ENCODE measurements at regions of chr5 and their contacts with region 1.

Region 1: DNA sequence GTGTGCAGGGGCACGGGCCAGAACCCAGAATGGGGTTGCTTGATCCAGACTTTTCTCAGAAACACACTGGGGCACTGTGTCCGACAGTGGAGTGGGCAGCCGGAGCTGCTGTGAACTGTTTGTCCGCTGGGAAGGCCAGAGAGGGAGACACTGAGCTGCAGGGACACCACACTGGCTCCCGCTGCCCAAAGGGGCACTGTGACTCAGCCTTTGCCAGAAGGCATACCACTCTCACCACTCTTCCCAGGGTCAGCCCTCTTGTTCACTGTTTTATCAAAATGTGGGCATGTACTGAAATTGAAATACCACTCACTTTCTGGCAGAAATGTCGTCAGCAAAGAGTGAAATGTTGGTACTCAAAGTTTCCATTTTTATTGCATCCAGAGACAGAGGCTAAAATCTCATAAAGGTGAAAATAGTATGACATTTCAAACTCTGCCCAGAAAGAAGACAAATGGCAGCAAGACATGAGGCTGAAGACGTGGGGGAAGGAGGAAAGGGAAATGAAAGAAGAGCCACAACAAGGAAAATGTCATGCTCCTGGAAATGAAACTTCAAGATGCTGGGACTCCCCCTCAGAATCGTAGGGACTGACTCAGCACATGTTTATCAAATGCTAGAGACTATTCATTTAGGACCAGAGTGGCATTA is 4.5 kb upstream of the IL7R start:
- DNase-seq: peak; percentile 45
- H3K4me3 Mint-ChIP-seq: peak overlapping the region; percentile 90
- H3K27ac Mint-ChIP-seq: peak overlapping the region; percentile 96
- H3K4me1 Mint-ChIP-seq: peaks cover 72% of the 10 kb centered on the region
- H3K27me3 Mint-ChIP-seq: no peaks in the 10 kb centered on the region

Region 2: GRCh38 chr5:35651002-35651756 is 201.0 kb before region 1 on chr5:
- intact Hi-C with region 1: loop called (anchors 1 kb)
- DNase-seq: peak; percentile 50
- H3K4me3 Mint-ChIP-seq: no peak overlapping the region
- H3K27ac Mint-ChIP-seq: no peak overlapping the region
- H3K4me1 Mint-ChIP-seq: peaks cover 5% of the 10 kb centered on the region
- H3K27me3 Mint-ChIP-seq: no peaks in the 10 kb centered on the region

Region 3: GRCh38 chr5:35777358-35778087 is 74.7 kb before region 1 on chr5:
- intact Hi-C with region 1: loop called (anchors 1 kb)
- DNase-seq: peak; percentile 53
- H3K4me3 Mint-ChIP-seq: no peak overlapping the region
- H3K27ac Mint-ChIP-seq: peak overlapping the region; percentile 30
- H3K4me1 Mint-ChIP-seq: peaks cover 70% of the 10 kb centered on the region
- H3K27me3 Mint-ChIP-seq: no peaks in the 10 kb centered on the region

Region 4: DNA sequence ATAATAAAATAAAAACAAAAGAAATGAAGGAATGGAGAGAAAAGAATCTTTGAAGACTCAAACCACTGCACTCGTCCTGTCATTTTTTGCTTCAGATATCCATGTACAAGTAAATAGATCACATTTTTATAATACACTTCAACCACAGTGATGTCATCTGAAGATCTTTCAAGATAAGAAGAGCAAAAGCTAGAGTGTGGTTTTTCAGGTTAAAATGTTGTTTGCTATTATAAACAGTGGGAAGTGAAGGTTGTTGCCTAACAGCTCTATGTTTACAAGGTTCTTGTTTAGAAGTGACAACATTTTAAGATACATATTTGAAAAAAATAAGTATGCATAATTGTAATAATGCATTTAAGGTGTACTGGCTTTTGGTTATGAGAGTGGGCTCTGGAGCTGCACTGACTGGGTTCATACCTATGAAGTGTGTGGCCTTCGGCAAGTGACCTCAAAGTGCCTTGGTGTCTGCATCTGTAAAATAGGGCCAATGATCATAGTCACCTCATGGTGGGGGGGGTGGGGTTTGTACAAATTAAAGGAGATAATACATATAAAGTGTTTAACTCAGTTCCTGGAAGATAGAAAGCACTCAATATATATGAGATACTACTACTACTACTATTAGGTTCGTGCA is 41.0 kb before region 1 on chr5:
- intact Hi-C with region 1: loop called (anchors 1 kb)
- DNase-seq: no peak
- H3K4me3 Mint-ChIP-seq: peak overlapping the region; percentile 70
- H3K27ac Mint-ChIP-seq: peak overlapping the region; percentile 98
- H3K4me1 Mint-ChIP-seq: peaks cover 56% of the 10 kb centered on the region
- H3K27me3 Mint-ChIP-seq: no peaks in the 10 kb centered on the region

Region 5: GRCh38 chr5:35902046-35902676 is 50.0 kb after region 1 on chr5:
- intact Hi-C with region 1: loop called (anchors 1 kb)
- DNase-seq: peak; percentile 50
- H3K4me3 Mint-ChIP-seq: peak overlapping the region; percentile 2
- H3K27ac Mint-ChIP-seq: peak overlapping the region; percentile 37
- H3K4me1 Mint-ChIP-seq: peaks cover 82% of the 10 kb centered on the region
- H3K27me3 Mint-ChIP-seq: peaks cover 7% of the 10 kb centered on the region

Region 6: DNA sequence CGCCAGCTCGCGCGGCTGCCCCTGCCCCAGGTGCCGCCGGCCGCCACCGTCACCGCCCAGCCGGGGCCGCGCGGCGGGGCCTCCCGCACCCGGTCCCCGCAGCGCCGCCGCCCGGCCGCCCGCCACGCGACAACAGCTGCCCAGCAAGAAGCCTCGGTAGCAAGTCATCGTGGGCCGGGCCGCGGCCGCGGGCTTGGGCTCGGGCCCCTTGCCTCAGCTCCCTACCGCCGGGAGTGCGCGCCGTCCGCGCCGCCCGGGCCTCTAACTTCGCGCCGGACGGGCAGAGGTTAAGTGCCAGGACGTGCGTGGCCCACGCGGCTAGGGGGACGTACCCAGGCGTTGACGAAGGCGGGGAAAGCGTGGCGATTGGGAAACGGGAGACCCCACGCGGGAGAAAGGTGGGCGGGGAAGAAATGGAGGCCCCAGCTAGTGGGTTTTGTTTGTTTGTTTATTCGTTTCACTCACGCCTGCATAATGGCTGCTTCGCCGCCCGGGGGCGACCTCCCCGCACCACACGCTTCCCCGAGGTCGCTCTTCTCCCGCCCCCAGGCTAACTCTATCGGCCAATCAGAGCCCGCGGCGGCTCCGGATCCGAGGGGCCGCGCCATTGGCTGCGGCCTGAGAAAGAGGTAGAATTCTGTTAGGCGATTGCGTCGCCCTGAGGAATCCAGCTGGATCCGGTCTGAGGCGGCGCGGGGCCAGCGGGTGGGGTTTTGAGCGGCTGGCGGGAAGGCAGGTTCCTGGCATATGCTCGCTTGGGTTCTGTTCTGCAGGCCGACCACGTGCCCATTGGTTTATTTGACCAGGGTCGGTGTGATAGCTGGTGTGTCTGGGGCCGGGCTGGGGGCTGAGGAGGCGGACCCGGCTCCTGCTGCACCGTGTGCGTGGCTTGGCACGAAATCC is 389.7 kb after region 1 on chr5 and contains the start of gene NADK2:
- intact Hi-C with region 1: loop called (anchors 10 kb)
- DNase-seq: peak; percentile 93
- H3K4me3 Mint-ChIP-seq: peak within 1 kb of the TSS; percentile 90
- H3K27ac Mint-ChIP-seq: peak within 1 kb of the TSS; percentile 96
- H3K4me1 Mint-ChIP-seq: peaks cover 39% of the 10 kb centered on the region
- H3K27me3 Mint-ChIP-seq: peaks cover 4% of the 10 kb centered on the region
- total RNA-seq, gene NADK2: 21.7 and 25.1 TPM in 2 replicates

Measured in activated T-helper 1 cell treated with anti-CD3 and anti-CD28 coated beads, Interleukin-12 subunit alpha, Interleukin-12 subunit beta, Interleukin-2, Interleukin-4 antibody, amounts not matched to agents 30 ng/mL and 10 ng/mL and 1 ng/mL, durations not matched to agents 14 hours and 24 hours and 36 hours (primary cell).